AG04449 (cell line): ENCODE measurements at regions of chr6 and their contacts with region 1.

Region 1: DNA sequence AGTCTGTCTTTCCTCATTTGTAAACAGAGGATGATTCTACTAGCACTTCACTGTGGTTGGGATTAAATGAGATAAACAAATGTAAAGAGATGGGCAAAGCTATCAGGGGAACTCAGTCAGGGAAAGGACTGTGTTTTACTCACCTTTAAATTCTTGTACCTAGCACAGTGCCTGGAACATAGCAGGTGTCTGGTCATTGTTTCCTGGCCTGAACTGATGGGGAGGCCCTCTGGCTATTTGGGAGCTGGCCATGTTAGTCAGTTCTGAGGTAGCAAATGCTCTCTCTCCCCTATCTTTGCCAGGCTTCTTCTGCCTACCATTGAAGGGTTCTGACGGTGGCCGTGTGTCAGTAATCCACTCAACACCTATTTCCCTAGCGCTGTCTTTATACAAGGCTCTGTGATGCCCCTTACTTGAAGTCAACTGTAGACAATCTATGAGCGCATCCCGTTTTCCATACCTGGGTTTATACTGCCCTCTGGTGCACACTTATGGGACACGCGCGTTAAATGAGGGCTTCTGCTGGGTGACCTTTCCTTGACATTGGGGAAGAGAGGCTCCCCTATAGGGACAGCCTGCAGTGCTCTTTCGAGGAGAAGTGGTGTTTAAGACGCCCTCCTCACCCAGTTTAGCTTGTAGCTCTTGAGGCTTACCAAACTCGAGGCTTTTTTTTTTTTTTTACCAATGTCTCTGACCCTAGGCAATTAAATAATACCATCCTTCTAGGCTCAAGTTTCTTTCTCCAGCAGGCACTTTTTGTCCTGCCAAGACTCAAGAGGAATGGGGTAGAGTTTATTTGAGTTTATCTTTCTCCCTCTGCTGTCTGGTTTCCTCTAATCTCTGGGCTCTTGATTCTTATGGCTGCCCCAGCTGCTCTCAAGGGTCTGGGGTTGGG is 4.0 kb upstream of the SPATS1 start:
- DNase-seq: no peak
- H3K4me3 ChIP-seq: no peak overlapping the region
- CTCF ChIP-seq: peak; percentile 75

Region 2: GRCh38 chr6:44304282-44305199 is 33.9 kb before region 1 on chr6:
- CTCF ChIA-PET with region 1: interaction called, 13 read pairs
- POLR2A ChIA-PET with region 1: no interaction called
- DNase-seq: no peak
- H3K4me3 ChIP-seq: no peak overlapping the region
- CTCF ChIP-seq: peak; percentile 78

Region 3: GRCh38 chr6:44312901-44313788 is 25.3 kb before region 1 on chr6 and contains the start of gene AARS2:
- CTCF ChIA-PET with region 1: interaction called, 45 read pairs
- POLR2A ChIA-PET with region 1: no interaction called
- DNase-seq: peak; percentile 37
- H3K4me3 ChIP-seq: peak within 1 kb of the TSS; percentile 94
- CTCF ChIP-seq: peak; percentile 97

Region 4: GRCh38 chr6:44327096-44327495 is 11.4 kb before region 1 on chr6:
- CTCF ChIA-PET with region 1: interaction called, 21 read pairs
- POLR2A ChIA-PET with region 1: no interaction called
- DNase-seq: no peak
- H3K4me3 ChIP-seq: no peak overlapping the region
- CTCF ChIP-seq: no peak

Region 5: DNA sequence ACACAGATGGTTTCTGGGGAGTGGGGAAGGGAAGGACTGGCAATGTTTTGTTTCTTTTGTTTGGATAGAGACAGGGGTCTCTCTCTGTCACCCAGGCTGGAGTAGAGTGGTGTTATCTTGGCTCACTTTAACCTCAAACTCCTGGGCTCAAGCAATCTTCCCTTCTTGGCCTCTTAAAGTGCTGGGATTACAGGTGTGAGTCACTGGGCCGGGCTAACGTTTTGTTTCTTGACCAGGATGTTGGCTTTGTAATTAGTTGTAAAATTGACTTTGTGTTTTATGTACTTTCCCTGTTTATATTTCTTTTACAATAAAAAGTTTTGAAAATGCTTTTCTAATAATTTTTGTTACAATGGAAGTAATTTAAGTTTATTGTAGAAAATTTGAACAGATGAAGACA is 14.9 kb after region 1 on chr6:
- CTCF ChIA-PET with region 1: interaction called, 17 read pairs
- POLR2A ChIA-PET with region 1: no interaction called
- DNase-seq: no peak
- H3K4me3 ChIP-seq: no peak overlapping the region
- CTCF ChIP-seq: no peak